Mammary epithelial cell (primary cell): ENCODE measurements at regions of chr13 and their contacts with region 1.

Region 1: DNA sequence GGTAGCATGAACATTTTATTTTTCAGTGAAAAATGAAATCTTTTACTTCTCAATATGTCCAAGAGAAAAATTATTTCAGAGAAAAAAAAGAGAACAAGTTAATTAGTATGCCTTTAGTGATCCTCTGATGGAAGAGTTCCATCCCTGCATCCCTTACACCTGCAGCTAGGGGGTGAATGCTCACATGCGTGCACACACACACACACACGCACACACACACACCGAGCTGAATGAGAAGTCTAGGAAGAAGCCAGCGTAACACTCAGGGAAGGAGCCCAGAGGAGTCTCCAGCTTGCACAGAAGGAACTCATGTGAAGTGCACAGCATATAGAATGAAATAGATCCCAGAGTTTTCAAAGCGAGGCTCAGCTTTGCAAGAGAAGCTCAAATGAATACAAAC is 510.5 kb downstream of the IRS2 start:
- DNase-seq: peak; percentile 40
- H3K4me3 ChIP-seq: no peak overlapping the region
- H3K27ac ChIP-seq: no peak overlapping the region
- H3K4me1 ChIP-seq: peaks cover 26% of the 10 kb centered on the region
- H3K27me3 ChIP-seq: no peaks in the 10 kb centered on the region
- CTCF ChIP-seq: peak; percentile 39 to 52

Region 2: GRCh38 chr13:109610517-109610916 is 334.7 kb after region 1 on chr13:
- CTCF ChIA-PET with region 1: no interaction called
- dilution Hi-C with region 1: no loop called
- in situ Hi-C with region 1: no loop called
- intact Hi-C with region 1: loop called (anchors 10 kb)
- DNase-seq: no peak
- H3K4me3 ChIP-seq: no peak overlapping the region
- H3K27ac ChIP-seq: no peak overlapping the region
- H3K4me1 ChIP-seq: no peaks in the 10 kb centered on the region
- H3K27me3 ChIP-seq: no peaks in the 10 kb centered on the region
- CTCF ChIP-seq: peak; percentile 22 to 51

Region 3: GRCh38 chr13:109743706-109744453 is 468.0 kb after region 1 on chr13:
- CTCF ChIA-PET with region 1: no interaction called
- dilution Hi-C with region 1: no loop called
- in situ Hi-C with region 1: no loop called
- intact Hi-C with region 1: loop called (anchors 5 kb)
- DNase-seq: peak; percentile 91
- H3K4me3 ChIP-seq: no peak overlapping the region
- H3K27ac ChIP-seq: peak overlapping the region; percentile 59
- H3K4me1 ChIP-seq: peaks cover 22% of the 10 kb centered on the region
- H3K27me3 ChIP-seq: no peaks in the 10 kb centered on the region
- CTCF ChIP-seq: peak; percentile 4 to 12